ENCODE measurements at regions of chr12 and their contacts with region 1.

Region 1: DNA sequence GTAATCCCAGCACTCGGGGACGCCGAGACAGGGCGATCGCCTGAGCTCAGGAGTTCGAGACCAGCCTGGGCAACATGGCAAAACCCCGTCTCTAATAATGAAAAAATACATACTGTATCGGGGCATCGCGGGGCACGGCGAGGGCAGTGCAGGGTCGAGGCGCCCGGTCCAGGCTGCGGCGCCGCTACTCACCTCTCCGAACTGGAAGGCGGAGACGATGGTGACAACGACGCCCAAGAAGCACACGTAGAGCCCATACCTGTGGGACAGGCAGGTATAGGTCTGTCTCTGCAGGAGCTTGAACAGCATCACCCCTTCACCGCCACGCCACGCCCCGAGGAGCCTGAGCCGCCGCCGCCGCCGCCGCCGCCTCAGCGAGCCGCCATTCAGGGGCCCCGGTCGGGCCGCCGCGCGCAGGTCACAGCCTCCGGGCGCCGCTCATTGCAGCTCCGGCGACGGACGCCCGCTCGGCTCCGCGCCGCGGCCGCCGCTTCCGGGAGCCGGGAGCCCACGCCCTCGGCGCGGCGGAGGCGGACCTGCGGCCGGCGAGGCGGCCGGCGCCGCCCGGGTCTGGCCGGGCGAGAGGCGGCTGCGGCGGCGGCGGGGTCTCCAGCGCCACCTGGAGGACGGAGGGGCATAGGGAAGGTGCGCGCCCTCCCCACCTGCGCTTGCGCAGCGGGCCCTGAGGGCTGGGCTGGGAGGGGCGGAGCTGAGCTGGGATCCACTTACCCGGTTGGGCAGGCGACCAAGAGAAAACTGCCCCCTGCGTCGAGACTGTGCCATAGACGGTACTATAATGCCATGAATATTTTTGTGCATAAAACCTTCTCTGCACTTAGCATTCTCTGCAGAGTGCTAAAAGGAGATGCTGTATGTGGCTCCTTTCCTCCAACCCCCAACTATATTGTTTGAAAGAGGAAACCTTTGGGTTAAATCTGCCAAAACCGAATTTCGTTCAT is at the start of gene GNPTAB:
- DNase-seq: peak; percentile 86
- H3K4me3 ChIP-seq: peak within 1 kb of the TSS; percentile 98 to 100 (median 99)
- H3K27ac ChIP-seq: peak within 1 kb of the TSS; percentile 47
- H3K4me1 ChIP-seq: peaks cover 5% of the 10 kb centered on the region
- H3K27me3 ChIP-seq: no peaks in the 10 kb centered on the region
- CTCF ChIP-seq: peak; percentile 41 to 64
- total RNA-seq, gene GNPTAB: 36.1 to 52.2 TPM

Region 2: DNA sequence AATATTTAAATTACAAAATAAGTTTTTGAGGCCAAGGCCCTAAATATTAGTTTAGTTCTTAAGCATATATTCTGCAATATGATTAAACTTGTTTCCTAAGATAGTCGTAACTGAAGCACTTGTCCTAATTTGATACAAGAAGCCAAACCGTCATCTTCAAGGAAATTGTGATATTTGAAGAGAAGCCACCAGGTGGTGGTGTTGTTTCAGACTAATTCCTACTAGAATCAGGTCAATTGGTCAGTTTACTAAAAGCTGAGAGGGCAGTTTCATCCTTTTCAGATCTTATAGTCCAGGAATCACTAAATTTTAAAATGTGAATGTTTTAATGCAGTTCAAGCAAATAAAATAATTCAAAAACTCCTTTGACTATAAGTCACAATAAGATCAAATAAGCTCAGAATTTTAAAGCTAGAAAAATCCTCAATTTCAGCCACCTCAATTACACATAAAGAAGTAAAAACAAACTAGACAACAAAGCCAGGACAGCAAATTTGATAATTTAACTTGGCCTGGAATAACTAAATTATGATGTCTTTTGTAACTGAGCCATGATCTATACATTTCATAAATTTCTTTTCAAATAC is 416.0 kb before region 1 on chr12:
- CTCF ChIA-PET with region 1: no interaction called
- dilution Hi-C with region 1: no loop called
- in situ Hi-C with region 1: loop called (anchors 10 to 25 kb)
- intact Hi-C with region 1: loop called (anchors 5 kb)
- DNase-seq: peak; percentile 42
- H3K4me3 ChIP-seq: no peak overlapping the region
- H3K27ac ChIP-seq: no peak overlapping the region
- H3K4me1 ChIP-seq: peaks cover 3% of the 10 kb centered on the region
- H3K27me3 ChIP-seq: no peaks in the 10 kb centered on the region
- CTCF ChIP-seq: peak; percentile 25 to 56

Region 3: DNA sequence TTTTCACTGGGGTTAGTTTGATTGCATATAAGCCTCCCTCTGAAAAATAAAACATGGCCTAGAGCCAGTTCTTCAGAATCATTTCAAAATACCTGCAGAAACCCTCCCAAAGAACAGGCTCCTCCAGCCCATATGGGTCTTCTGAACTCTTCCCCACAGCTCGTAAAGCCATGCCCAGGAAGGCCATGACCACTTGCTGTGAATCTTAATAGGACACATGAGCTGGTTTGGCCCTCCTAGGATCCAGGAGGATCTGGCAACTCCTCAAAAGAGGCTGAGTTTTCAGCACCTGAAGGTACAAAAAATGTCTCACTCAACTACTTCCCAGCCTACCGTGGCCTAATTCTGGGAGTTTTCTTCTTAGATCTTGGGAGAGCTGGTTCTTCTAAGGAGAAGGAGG is 233.5 kb before region 1 on chr12:
- CTCF ChIA-PET with region 1: interaction called, 22 read pairs
- dilution Hi-C with region 1: no loop called
- in situ Hi-C with region 1: no loop called
- intact Hi-C with region 1: no loop called
- DNase-seq: no peak
- H3K4me3 ChIP-seq: no peak overlapping the region
- H3K27ac ChIP-seq: no peak overlapping the region
- H3K4me1 ChIP-seq: no peaks in the 10 kb centered on the region
- H3K27me3 ChIP-seq: no peaks in the 10 kb centered on the region
- CTCF ChIP-seq: no peak

Region 4: GRCh38 chr12:101782273-101782731 is 48.3 kb before region 1 on chr12:
- CTCF ChIA-PET with region 1: no interaction called
- dilution Hi-C with region 1: no loop called
- in situ Hi-C with region 1: loop called in 1 of 2 experiments (anchors 10 kb)
- intact Hi-C with region 1: no loop called
- DNase-seq: no peak
- H3K4me3 ChIP-seq: no peak overlapping the region
- H3K27ac ChIP-seq: no peak overlapping the region
- H3K4me1 ChIP-seq: no peaks in the 10 kb centered on the region
- H3K27me3 ChIP-seq: no peaks in the 10 kb centered on the region
- CTCF ChIP-seq: no peak

Region 5: DNA sequence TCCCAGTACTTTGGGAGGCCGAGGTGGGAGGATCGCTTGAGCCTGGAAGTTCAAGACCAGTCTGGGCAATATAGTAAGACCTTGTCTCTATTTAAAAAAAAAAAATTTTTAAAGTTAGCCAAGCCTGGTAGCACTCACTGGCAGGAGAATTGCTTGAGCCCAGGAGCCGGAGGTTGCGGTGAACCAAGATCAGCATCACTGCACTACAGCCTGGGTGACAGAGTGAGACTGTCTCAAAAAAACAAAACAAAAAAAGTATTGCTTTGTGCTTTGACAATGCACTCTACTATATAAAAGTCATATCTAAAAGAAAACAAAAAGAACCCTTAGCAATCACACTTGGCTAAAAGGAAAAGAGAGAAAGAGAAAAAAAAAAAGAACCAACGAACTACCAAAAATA is 26.7 kb before region 1 on chr12:
- CTCF ChIA-PET with region 1: no interaction called
- dilution Hi-C with region 1: no loop called
- in situ Hi-C with region 1: no loop called
- intact Hi-C with region 1: no loop called
- DNase-seq: no peak
- H3K4me3 ChIP-seq: no peak overlapping the region
- H3K27ac ChIP-seq: no peak overlapping the region
- H3K4me1 ChIP-seq: peaks cover 5% of the 10 kb centered on the region
- H3K27me3 ChIP-seq: no peaks in the 10 kb centered on the region
- CTCF ChIP-seq: no peak

Region 6: DNA sequence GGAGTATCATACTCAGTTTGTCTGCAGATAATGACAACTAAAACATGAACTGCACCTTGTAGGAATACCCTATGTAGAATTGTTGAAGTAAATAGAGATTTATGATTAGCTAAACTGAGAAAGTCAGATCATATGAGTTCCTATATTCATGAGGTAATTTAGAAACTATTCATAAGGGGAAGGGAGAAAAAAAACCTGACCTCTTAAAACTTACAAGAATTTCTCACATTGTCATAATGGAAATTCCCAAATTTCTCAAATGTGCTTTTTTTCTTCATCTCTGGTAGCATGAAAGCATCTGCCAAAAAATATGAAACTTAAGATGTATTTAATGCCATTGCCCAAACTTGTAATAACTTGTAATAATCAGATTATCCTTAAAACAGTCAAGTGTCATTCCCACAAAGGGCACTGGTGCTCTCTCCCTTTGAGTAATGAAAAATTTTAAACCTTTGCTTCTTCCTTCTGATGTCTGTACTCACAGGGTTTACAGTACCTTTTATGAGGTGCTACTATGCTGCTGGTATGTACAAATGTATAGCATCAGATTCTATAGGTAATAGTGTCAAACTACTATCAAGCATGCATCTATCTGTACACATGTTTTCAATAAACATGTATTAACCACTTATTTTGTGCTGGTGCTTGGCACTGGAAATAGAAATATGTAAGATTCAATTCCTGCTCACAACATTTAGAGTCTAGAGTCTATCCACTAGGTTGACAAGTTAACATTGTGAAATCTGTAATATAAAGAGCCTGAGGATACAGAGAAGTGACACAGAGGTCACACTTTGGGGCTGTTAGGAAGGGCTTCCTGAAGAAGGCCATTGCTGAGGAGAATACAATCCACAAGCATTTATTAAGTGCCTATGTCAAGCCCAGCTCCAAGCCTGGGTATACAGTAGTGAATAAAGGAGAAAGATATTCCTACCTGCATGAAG is 29.3 kb after region 1 on chr12:
- CTCF ChIA-PET with region 1: no interaction called
- dilution Hi-C with region 1: no loop called
- in situ Hi-C with region 1: no loop called
- intact Hi-C with region 1: no loop called
- DNase-seq: peak; percentile 86
- H3K4me3 ChIP-seq: no peak overlapping the region
- H3K27ac ChIP-seq: no peak overlapping the region
- H3K4me1 ChIP-seq: peaks cover 42% of the 10 kb centered on the region
- H3K27me3 ChIP-seq: no peaks in the 10 kb centered on the region
- CTCF ChIP-seq: no peak

Measured in mammary epithelial cell (primary cell).